Body of pancreas (tissue), 4 donors: ENCODE measurements at regions of chr5 and their contacts with region 1.

Region 1: GRCh38 chr5:116947691-116948528 is 373.3 kb upstream of the SEMA6A start:
- DNase-seq: peak; percentile 69 to 81 (median 78)
- ATAC-seq: peak; percentile 83
- H3K4me3 ChIP-seq: no peak overlapping the region
- H3K27ac ChIP-seq: no peak overlapping the region
- H3K4me1 ChIP-seq: peaks cover 5% of the 10 kb centered on the region
- H3K27me3 ChIP-seq: no peaks in the 10 kb centered on the region
- CTCF ChIP-seq: peak; percentile 57 to 83 (median 75)
- POLR2A ChIP-seq: no peak

Region 2: GRCh38 chr5:116574367-116575325 is 373.3 kb before region 1 on chr5 and contains the start of gene SEMA6A:
- intact Hi-C with region 1: loop called (anchors 10 kb)
- DNase-seq: peak; percentile 91 to 95 (median 92)
- ATAC-seq: peak; percentile 82
- H3K4me3 ChIP-seq: peak within 1 kb of the TSS; percentile 44 to 54
- H3K27ac ChIP-seq: peak within 1 kb of the TSS; percentile 68 to 79 (median 70)
- H3K4me1 ChIP-seq: peaks cover 33% of the 10 kb centered on the region
- H3K27me3 ChIP-seq: no peaks in the 10 kb centered on the region
- CTCF ChIP-seq: peak in 4 of 7 experiments; percentile 32 to 42 (median 34)
- POLR2A ChIP-seq: peak; percentile 85 to 91 (median 87)
- total RNA-seq, gene SEMA6A: 18.7 to 25.1 TPM

Region 3: GRCh38 chr5:117519957-117520500 is 572.1 kb after region 1 on chr5:
- intact Hi-C with region 1: no loop called
- DNase-seq: no peak
- ATAC-seq: no peak
- H3K4me3 ChIP-seq: no peak overlapping the region
- H3K27ac ChIP-seq: no peak overlapping the region
- H3K4me1 ChIP-seq: no peaks in the 10 kb centered on the region
- H3K27me3 ChIP-seq: no peaks in the 10 kb centered on the region
- CTCF ChIP-seq: no peak
- POLR2A ChIP-seq: no peak